ENCODE measurements at regions of chr3 and their contacts with region 1.

Region 1: DNA sequence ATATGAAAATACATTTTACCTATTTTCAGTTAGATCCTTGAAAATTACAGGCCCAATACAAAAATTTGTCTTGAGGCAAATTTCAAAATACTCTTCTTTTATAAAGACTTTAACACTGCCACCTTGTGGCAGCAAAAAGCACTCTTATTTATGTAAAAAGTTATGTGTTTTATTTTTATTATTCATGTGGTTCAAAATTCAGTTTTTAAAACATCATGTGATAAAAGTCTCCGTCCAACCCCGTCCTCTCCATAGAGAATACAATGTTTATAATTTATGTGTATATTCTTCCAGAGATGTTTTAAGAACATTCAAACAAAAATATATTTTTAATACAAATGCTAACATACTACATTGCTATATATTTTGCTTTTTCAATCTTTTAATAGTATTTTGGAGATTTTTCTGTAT is 36.9 kb upstream of the TRIM59 start:
- DNase-seq: peak in 1 of 2 donors; percentile 64
- ATAC-seq: peak in 1 of 3 donors; percentile 34
- H3K4me3 ChIP-seq: no peak overlapping the region
- H3K4me3 Mint-ChIP-seq: no peak overlapping the region
- H3K27ac ChIP-seq: no peak overlapping the region
- H3K27ac Mint-ChIP-seq: no peak overlapping the region
- H3K4me1 ChIP-seq: peaks cover 4% of the 10 kb centered on the region
- H3K4me1 Mint-ChIP-seq: peaks cover 5 to 13% of the 10 kb centered on the region in 2 donors
- H3K27me3 ChIP-seq: no peaks in the 10 kb centered on the region
- H3K27me3 Mint-ChIP-seq: peaks cover 5 to 8% of the 10 kb centered on the region in 2 donors
- CTCF ChIP-seq: peak; percentile 77

Region 2: GRCh38 chr3:159619341-159619885 is 867.1 kb before region 1 on chr3:
- intact Hi-C with region 1: no loop called
- DNase-seq: no peak
- ATAC-seq: no peak
- H3K4me3 ChIP-seq: no peak overlapping the region
- H3K4me3 Mint-ChIP-seq: no peak overlapping the region
- H3K27ac ChIP-seq: no peak overlapping the region
- H3K27ac Mint-ChIP-seq: no peak overlapping the region
- H3K4me1 ChIP-seq: no peaks in the 10 kb centered on the region
- H3K4me1 Mint-ChIP-seq: no peaks in the 10 kb centered on the region
- H3K27me3 ChIP-seq: no peaks in the 10 kb centered on the region
- H3K27me3 Mint-ChIP-seq: no peaks in the 10 kb centered on the region
- CTCF ChIP-seq: no peak

Region 3: DNA sequence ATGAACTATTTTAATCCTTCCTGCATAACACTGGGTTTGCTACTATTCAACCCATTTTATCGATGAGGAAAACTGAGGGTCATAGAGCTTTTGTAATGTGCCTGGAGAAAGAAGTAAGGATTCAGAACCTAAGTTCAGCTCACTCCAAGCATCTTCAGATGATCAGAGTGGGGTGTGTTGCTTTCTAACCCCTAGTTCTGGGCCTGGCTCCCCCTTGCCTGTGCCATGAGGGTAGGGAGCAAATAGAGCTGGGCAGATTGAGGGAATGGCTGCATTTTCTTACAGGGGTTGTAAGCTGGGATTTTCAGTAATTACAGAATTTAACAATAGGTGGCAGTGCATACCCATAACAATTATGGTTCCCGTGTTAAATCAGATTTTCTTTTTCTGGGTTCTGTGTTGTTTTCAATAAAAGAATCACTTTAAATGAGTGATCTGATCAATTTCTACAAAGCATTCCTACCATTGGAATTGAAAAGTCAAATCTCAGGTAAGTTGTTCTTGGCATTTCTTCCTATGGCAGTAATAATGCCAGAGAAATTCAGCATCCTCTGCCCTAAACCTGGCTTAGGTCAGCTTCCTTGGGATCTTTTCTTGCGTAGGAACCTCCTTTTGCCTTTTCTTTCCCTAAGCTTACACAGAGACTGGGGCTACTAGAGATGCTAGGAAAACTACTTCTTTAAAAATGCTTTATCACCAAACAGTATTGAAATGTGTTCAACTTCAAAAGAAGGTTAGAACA is 601.6 kb before region 1 on chr3:
- intact Hi-C with region 1: loop called (anchors 2 kb)
- DNase-seq: peak in 1 of 2 donors; percentile 41
- ATAC-seq: peak in 1 of 3 donors; percentile 40
- H3K4me3 ChIP-seq: no peak overlapping the region
- H3K4me3 Mint-ChIP-seq: no peak overlapping the region
- H3K27ac ChIP-seq: no peak overlapping the region
- H3K27ac Mint-ChIP-seq: no peak overlapping the region
- H3K4me1 ChIP-seq: no peaks in the 10 kb centered on the region
- H3K4me1 Mint-ChIP-seq: no peaks in the 10 kb centered on the region
- H3K27me3 ChIP-seq: no peaks in the 10 kb centered on the region
- H3K27me3 Mint-ChIP-seq: peaks cover 0 to 5% of the 10 kb centered on the region in 2 donors
- CTCF ChIP-seq: peak; percentile 31

Region 4: DNA sequence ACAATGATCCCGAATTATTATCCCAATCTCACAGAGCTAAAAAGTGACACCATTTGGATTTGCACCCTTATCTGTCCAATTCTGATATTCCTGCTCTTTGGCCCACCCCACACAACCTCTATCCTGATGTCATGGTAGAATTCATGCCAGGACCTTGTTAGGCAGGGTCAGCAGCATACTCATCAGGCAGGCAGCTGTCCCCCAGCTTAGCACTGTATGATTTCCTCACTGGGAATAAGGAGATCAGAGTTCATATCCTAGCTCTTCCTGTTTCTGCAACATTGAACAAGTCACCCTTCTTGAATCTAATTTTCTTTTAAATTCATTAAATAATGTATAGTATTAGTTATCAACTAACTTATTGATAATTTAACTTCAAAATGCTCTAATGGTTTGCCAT is 273.3 kb before region 1 on chr3:
- intact Hi-C with region 1: no loop called
- DNase-seq: no peak
- ATAC-seq: no peak
- H3K4me3 ChIP-seq: no peak overlapping the region
- H3K4me3 Mint-ChIP-seq: no peak overlapping the region
- H3K27ac ChIP-seq: no peak overlapping the region
- H3K27ac Mint-ChIP-seq: no peak overlapping the region
- H3K4me1 ChIP-seq: no peaks in the 10 kb centered on the region
- H3K4me1 Mint-ChIP-seq: no peaks in the 10 kb centered on the region
- H3K27me3 ChIP-seq: peaks cover 2% of the 10 kb centered on the region
- H3K27me3 Mint-ChIP-seq: peaks cover 11 to 32% of the 10 kb centered on the region in 2 donors
- CTCF ChIP-seq: no peak

Region 5: GRCh38 chr3:160287666-160288065 is 198.8 kb before region 1 on chr3:
- intact Hi-C with region 1: no loop called
- DNase-seq: no peak
- ATAC-seq: no peak
- H3K4me3 ChIP-seq: no peak overlapping the region
- H3K4me3 Mint-ChIP-seq: no peak overlapping the region
- H3K27ac ChIP-seq: no peak overlapping the region
- H3K27ac Mint-ChIP-seq: no peak overlapping the region
- H3K4me1 ChIP-seq: no peaks in the 10 kb centered on the region
- H3K4me1 Mint-ChIP-seq: no peaks in the 10 kb centered on the region
- H3K27me3 ChIP-seq: no peaks in the 10 kb centered on the region
- H3K27me3 Mint-ChIP-seq: no peaks in the 10 kb centered on the region
- CTCF ChIP-seq: no peak

Region 6: GRCh38 chr3:160473978-160474377 is 12.5 kb before region 1 on chr3:
- intact Hi-C with region 1: no loop called
- DNase-seq: no peak
- ATAC-seq: no peak
- H3K4me3 ChIP-seq: no peak overlapping the region
- H3K4me3 Mint-ChIP-seq: no peak overlapping the region
- H3K27ac ChIP-seq: no peak overlapping the region
- H3K27ac Mint-ChIP-seq: no peak overlapping the region
- H3K4me1 ChIP-seq: peaks cover 7% of the 10 kb centered on the region
- H3K4me1 Mint-ChIP-seq: no peaks in the 10 kb centered on the region
- H3K27me3 ChIP-seq: no peaks in the 10 kb centered on the region
- H3K27me3 Mint-ChIP-seq: peaks cover 0 to 12% of the 10 kb centered on the region in 2 donors
- CTCF ChIP-seq: no peak

Measured in natural killer cell (primary cell).